CD14-positive monocyte (primary cell): ENCODE measurements at regions of chr19 and their contacts with region 1.

Region 1: GRCh38 chr19:1103708-1104310 is at the start of gene GPX4:
- DNase-seq: peak; percentile 99 to 100 (median 100)
- H3K4me3 ChIP-seq: peak within 1 kb of the TSS; percentile 78 to 86 (median 82)
- H3K4me3 Mint-ChIP-seq: peak within 1 kb of the TSS; percentile 78 to 80
- H3K27ac ChIP-seq: peak within 1 kb of the TSS; percentile 95 to 99
- H3K27ac Mint-ChIP-seq: peak within 1 kb of the TSS; percentile 96 to 99 (median 98)
- H3K4me1 ChIP-seq: peaks cover 71 to 80% of the 10 kb centered on the region in 2 donors
- H3K4me1 Mint-ChIP-seq: peaks cover 49% of the 10 kb centered on the region
- H3K27me3 ChIP-seq: no peaks in the 10 kb centered on the region
- H3K27me3 Mint-ChIP-seq: peaks cover 0 to 3% (median 0%) of the 10 kb centered on the region in 3 donors
- CTCF ChIP-seq: no peak
- polyA plus RNA-seq, gene GPX4: 459 to 508 (median 493) TPM

Region 2: GRCh38 chr19:925526-926322 is 178.1 kb before region 1 on chr19 and contains the start of gene ARID3A:
- intact Hi-C with region 1: loop called in 1 of 2 experiments (anchors 5 kb)
- DNase-seq: peak; percentile 69 to 75 (median 73)
- H3K4me3 ChIP-seq: peak within 1 kb of the TSS; percentile 89 to 99 (median 90)
- H3K4me3 Mint-ChIP-seq: peak within 1 kb of the TSS; percentile 84 to 89
- H3K27ac ChIP-seq: peak within 1 kb of the TSS; percentile 85 to 87
- H3K27ac Mint-ChIP-seq: peak within 1 kb of the TSS in 6 of 7 donors; percentile 79 to 96 (median 92)
- H3K4me1 ChIP-seq: peaks cover 40 to 45% of the 10 kb centered on the region in 2 donors
- H3K4me1 Mint-ChIP-seq: peaks cover 41% of the 10 kb centered on the region
- H3K27me3 ChIP-seq: peaks cover 1 to 8% of the 10 kb centered on the region in 2 donors
- H3K27me3 Mint-ChIP-seq: peaks cover 14 to 16% (median 15%) of the 10 kb centered on the region in 3 donors
- CTCF ChIP-seq: no peak
- polyA plus RNA-seq, gene ARID3A: 2.1 to 41.6 (median 3.2) TPM

Region 3: DNA sequence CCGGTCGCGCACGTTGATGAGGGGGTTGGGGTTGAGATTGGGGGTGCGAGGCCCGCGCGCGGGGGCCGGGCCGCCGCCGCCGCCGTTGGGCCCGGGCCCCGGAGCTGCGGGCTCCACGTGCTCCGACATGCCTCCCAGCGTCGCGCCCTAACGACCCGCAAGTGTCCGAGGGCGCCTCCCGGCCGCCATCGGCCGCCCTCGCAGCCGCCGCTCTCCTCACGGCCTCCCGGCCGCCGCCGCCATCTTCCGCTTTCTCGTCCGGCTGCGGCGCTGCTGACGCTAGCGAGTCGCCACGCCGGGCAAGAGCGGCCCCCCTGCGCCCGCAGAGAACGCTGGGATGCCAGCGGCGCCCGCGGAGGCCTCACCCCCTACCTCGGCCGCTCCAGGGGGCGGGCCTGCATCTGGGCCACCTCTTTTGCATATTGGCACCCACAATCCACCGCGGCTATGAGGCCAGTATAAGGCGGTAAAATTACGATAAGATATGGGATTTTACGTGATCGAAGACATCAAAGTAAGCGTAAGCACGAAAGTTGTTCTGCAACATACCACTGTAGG is 82.9 kb before region 1 on chr19 and contains the start of gene TMEM259:
- intact Hi-C with region 1: loop called in 1 of 2 experiments (anchors 10 kb)
- DNase-seq: peak; percentile 95 to 98 (median 97)
- H3K4me3 ChIP-seq: peak within 1 kb of the TSS; percentile 45 to 96 (median 96)
- H3K4me3 Mint-ChIP-seq: peak within 1 kb of the TSS; percentile 88 to 94
- H3K27ac ChIP-seq: peak within 1 kb of the TSS; percentile 84 to 99
- H3K27ac Mint-ChIP-seq: peak within 1 kb of the TSS; percentile 95 to 99 (median 98)
- H3K4me1 ChIP-seq: peaks cover 53 to 55% of the 10 kb centered on the region in 2 donors
- H3K4me1 Mint-ChIP-seq: peaks cover 46% of the 10 kb centered on the region
- H3K27me3 ChIP-seq: no peaks in the 10 kb centered on the region
- H3K27me3 Mint-ChIP-seq: no peaks in the 10 kb centered on the region
- CTCF ChIP-seq: no peak
- polyA plus RNA-seq, gene TMEM259: 37.4 to 417 (median 45.0) TPM

Region 4: GRCh38 chr19:1064661-1065605 is 38.9 kb before region 1 on chr19:
- intact Hi-C with region 1: loop called (anchors 5 kb)
- DNase-seq: peak; percentile 71 to 78 (median 76)
- H3K4me3 ChIP-seq: peak overlapping the region in 1 of 3 experiments; percentile 100
- H3K4me3 Mint-ChIP-seq: peak overlapping the region; percentile 37 to 55
- H3K27ac ChIP-seq: no peak overlapping the region
- H3K27ac Mint-ChIP-seq: peak overlapping the region in 3 of 7 donors; percentile 41 to 75 (median 55)
- H3K4me1 ChIP-seq: peaks cover 54 to 65% of the 10 kb centered on the region in 2 donors
- H3K4me1 Mint-ChIP-seq: peaks cover 45% of the 10 kb centered on the region
- H3K27me3 ChIP-seq: no peaks in the 10 kb centered on the region
- H3K27me3 Mint-ChIP-seq: peaks cover 0 to 2% (median 2%) of the 10 kb centered on the region in 3 donors
- CTCF ChIP-seq: peak; percentile 93

Region 5: DNA sequence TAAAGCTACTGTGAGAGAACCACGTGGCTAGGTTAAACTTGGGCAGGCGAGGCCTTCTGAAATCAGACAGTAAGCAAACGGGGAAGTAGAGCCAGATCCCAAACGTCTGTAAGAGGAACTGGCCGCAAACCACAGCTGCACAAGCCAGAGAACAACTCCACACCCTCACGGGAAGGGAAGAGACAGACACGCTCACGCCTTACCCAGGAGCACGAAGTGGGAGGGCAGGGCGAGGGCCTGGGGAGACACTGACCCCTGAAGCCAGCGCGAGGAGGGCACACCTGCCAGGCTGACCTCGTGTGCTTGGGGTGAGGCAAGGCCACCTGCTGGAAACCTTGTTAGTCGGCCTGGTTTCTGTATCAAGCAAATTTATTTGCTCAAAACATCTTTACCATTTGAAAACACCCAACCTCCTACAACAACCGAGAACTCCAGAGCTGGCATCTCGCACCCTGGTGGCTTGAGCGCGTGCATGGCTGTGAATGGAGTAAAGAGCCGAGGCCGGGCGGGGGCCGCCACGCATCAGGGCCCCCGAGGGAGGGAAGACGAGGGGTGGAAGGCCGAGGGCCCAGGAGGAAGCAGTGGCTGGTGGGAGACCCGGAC is 15.9 kb before region 1 on chr19:
- intact Hi-C with region 1: loop called in 1 of 2 experiments (anchors 2 kb)
- DNase-seq: peak; percentile 91 to 96 (median 96)
- H3K4me3 ChIP-seq: peak overlapping the region in 1 of 3 experiments; percentile 47
- H3K4me3 Mint-ChIP-seq: peak overlapping the region; percentile 44 to 64
- H3K27ac ChIP-seq: peak overlapping the region; percentile 95 to 97
- H3K27ac Mint-ChIP-seq: peak overlapping the region; percentile 97 to 99 (median 98)
- H3K4me1 ChIP-seq: peaks cover 58 to 77% of the 10 kb centered on the region in 2 donors
- H3K4me1 Mint-ChIP-seq: peaks cover 59% of the 10 kb centered on the region
- H3K27me3 ChIP-seq: no peaks in the 10 kb centered on the region
- H3K27me3 Mint-ChIP-seq: peaks cover 0 to 5% (median 0%) of the 10 kb centered on the region in 3 donors
- CTCF ChIP-seq: no peak

Region 6: GRCh38 chr19:1249298-1249989 is 145.6 kb after region 1 on chr19:
- intact Hi-C with region 1: loop called in 1 of 2 experiments (anchors 10 kb)
- DNase-seq: peak; percentile 93 to 97 (median 95)
- H3K4me3 ChIP-seq: peak overlapping the region; percentile 77 to 99 (median 83)
- H3K4me3 Mint-ChIP-seq: peak overlapping the region; percentile 84
- H3K27ac ChIP-seq: peak overlapping the region; percentile 64 to 95
- H3K27ac Mint-ChIP-seq: peak overlapping the region in 6 of 7 donors; percentile 46 to 87 (median 75)
- H3K4me1 ChIP-seq: peaks cover 38 to 46% of the 10 kb centered on the region in 2 donors
- H3K4me1 Mint-ChIP-seq: peaks cover 24% of the 10 kb centered on the region
- H3K27me3 ChIP-seq: no peaks in the 10 kb centered on the region
- H3K27me3 Mint-ChIP-seq: peaks cover 0 to 6% (median 0%) of the 10 kb centered on the region in 3 donors
- CTCF ChIP-seq: no peak

Region 7: DNA sequence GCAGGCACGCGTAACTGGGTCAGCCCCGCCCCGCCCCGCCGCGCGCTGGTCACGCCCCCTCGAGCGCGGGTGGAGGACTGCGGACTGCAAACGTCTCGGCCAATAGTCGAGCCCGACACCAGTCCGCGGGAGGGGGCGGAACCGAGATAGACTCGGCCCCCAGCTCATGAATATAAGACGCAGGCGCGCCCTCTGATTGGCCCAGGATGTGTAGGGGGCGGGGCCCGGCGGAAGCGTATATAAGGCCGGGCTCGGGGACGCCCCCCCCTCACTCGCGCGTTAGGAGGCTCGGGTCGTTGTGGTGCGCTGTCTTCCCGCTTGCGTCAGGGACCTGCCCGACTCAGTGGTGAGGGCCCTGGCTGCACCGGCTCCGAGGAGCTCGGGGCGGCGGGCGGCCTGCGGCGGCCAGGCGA is 165.3 kb after region 1 on chr19 and contains the start of gene CIRBP:
- intact Hi-C with region 1: loop called in 1 of 2 experiments (anchors 5 kb)
- DNase-seq: peak; percentile 99 to 100 (median 99)
- H3K4me3 ChIP-seq: peak within 1 kb of the TSS; percentile 76 to 98 (median 87)
- H3K4me3 Mint-ChIP-seq: peak within 1 kb of the TSS; percentile 82 to 89
- H3K27ac ChIP-seq: peak within 1 kb of the TSS; percentile 73 to 87
- H3K27ac Mint-ChIP-seq: peak within 1 kb of the TSS; percentile 84 to 94 (median 91)
- H3K4me1 ChIP-seq: peaks cover 76 to 88% of the 10 kb centered on the region in 2 donors
- H3K4me1 Mint-ChIP-seq: peaks cover 72% of the 10 kb centered on the region
- H3K27me3 ChIP-seq: peaks cover 0 to 8% of the 10 kb centered on the region in 2 donors
- H3K27me3 Mint-ChIP-seq: peaks cover 6 to 14% (median 9%) of the 10 kb centered on the region in 3 donors
- CTCF ChIP-seq: no peak
- polyA plus RNA-seq, gene CIRBP: 39.6 to 600 (median 51.1) TPM